ENCODE measurements at regions of chr11 and their contacts with region 1.

Region 1: DNA sequence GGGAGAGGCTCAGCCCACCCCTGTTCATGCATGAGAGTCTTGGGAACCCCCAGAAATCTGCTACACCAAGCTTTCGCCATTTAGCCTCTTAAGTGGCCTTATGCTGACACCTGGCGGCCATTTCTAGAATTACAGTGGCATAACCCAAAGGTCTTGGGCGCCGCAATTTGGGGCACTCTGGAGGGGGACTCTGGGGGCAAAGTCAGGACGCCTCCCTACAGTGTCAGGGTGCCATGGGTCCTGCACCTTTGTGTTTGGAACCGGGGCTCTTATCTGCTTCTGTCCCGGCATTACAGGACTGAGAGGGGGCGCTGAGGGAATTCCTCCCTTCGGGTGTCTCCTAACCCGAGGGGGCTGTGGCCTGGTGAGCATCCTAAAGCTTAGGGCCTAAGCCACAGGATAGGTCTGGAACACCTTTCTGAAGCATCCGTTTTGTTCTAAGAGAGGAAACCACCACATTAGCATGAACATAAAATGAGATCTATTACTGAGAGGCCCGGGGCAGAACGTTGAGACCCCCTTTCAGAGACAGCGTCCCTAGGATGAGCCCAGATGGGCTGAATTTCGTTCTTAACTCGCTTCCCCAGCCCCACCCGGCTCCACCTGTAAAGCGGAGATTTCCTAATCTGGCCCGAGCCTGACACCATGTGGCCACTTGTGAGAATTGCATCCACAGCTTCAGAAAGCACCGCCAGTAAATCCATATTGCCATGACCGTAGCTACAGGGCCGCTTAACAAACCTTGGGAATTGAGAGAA is 9.3 kb downstream of the INS start:
- DNase-seq: peak; percentile 68
- ATAC-seq: peak; percentile 87
- H3K4me3 Mint-ChIP-seq: peak overlapping the region; percentile 15
- H3K27ac Mint-ChIP-seq: no peak overlapping the region
- H3K4me1 Mint-ChIP-seq: peaks cover 12% of the 10 kb centered on the region
- H3K27me3 Mint-ChIP-seq: peaks cover 35% of the 10 kb centered on the region
- CTCF ChIP-seq: peak; percentile 79

Region 2: GRCh38 chr11:1652771-1653540 is 498.7 kb before region 1 on chr11:
- CTCF ChIA-PET with region 1: interaction called, 48 read pairs
- POLR2A ChIA-PET with region 1: no interaction called
- intact Hi-C with region 1: loop called (anchors 1 kb)
- DNase-seq: peak; percentile 74
- ATAC-seq: peak; percentile 91
- H3K4me3 Mint-ChIP-seq: no peak overlapping the region
- H3K27ac Mint-ChIP-seq: no peak overlapping the region
- H3K4me1 Mint-ChIP-seq: no peaks in the 10 kb centered on the region
- H3K27me3 Mint-ChIP-seq: peaks cover 24% of the 10 kb centered on the region
- CTCF ChIP-seq: peak; percentile 80

Region 3: DNA sequence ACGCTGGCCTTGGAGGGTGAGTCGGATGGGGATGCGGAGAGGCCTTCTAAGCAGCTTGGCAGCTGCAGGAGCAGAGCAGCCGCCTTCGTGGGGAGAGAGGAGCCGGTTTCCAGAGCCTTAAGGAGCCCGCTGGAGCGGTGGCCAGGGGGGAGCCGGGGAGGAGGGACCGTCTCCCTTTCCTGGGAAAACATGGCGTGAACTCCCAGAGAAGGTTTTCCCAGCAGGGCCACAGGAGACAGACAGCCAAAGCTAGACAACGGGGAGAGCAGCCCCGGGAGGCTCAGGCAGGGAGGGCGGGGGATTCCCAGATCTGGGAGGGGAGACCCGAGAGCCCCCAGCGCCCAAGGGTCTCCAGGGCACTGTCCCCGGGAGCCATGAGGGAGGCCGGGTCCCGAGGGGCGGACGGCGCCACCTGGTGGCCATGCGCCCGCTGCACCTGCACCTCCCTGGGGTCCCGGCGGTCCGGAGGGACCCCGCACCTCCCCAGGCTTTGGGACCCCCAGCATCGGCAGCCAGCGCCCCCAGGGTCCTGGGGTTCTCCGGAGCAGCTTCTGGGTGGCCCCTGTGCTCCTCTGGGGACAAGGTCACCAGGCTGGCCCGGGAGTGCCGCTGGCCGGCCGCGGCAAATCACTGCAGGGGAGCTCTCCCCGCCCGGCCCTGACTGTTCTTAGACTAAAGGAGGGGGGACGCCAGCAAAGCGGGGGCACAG is 319.3 kb before region 1 on chr11:
- CTCF ChIA-PET with region 1: interaction called, 28 read pairs
- POLR2A ChIA-PET with region 1: no interaction called
- intact Hi-C with region 1: loop called (anchors 1 kb)
- DNase-seq: peak; percentile 76
- ATAC-seq: peak; percentile 80
- H3K4me3 Mint-ChIP-seq: no peak overlapping the region
- H3K27ac Mint-ChIP-seq: no peak overlapping the region
- H3K4me1 Mint-ChIP-seq: peaks cover 1% of the 10 kb centered on the region
- H3K27me3 Mint-ChIP-seq: peaks cover 20% of the 10 kb centered on the region
- CTCF ChIP-seq: peak; percentile 82

Region 4: GRCh38 chr11:1882519-1883238 is 269.0 kb before region 1 on chr11:
- CTCF ChIA-PET with region 1: interaction called, 15 read pairs
- POLR2A ChIA-PET with region 1: no interaction called
- intact Hi-C with region 1: loop called (anchors 2 kb)
- DNase-seq: peak; percentile 73
- ATAC-seq: peak; percentile 83
- H3K4me3 Mint-ChIP-seq: no peak overlapping the region
- H3K27ac Mint-ChIP-seq: no peak overlapping the region
- H3K4me1 Mint-ChIP-seq: peaks cover 35% of the 10 kb centered on the region
- H3K27me3 Mint-ChIP-seq: no peaks in the 10 kb centered on the region
- CTCF ChIP-seq: no peak

Region 5: GRCh38 chr11:2002807-2003206 is 148.9 kb before region 1 on chr11:
- CTCF ChIA-PET with region 1: interaction called, 10 read pairs
- POLR2A ChIA-PET with region 1: no interaction called
- intact Hi-C with region 1: no loop called
- DNase-seq: no peak
- ATAC-seq: peak; percentile 31
- H3K4me3 Mint-ChIP-seq: no peak overlapping the region
- H3K27ac Mint-ChIP-seq: no peak overlapping the region
- H3K4me1 Mint-ChIP-seq: no peaks in the 10 kb centered on the region
- H3K27me3 Mint-ChIP-seq: no peaks in the 10 kb centered on the region
- CTCF ChIP-seq: no peak